ENCODE measurements at regions of chr19 and their contacts with region 1.

Region 1: DNA sequence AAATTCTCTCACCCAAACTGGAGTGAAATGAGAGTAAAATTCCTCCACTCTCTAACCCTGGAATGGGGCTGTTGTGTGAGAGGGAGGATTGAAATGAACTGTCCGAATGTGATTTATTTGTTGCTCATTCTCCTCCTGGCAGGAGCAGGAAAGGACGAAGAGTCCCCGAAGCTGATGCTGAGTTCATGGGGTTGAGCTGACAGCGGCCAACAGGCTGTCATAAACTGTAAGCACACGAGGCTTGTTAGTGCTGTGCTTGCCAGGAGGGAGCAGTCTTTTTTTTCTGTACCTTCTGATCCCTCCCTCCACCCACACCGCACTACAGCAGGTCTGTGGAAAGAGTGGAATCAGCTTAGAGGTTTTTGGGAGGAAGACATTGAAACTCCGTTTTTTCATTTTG is 33.1 kb upstream of the ZNF331 start:
- DNase-seq: no peak
- ATAC-seq: no peak
- H3K4me3 ChIP-seq: no peak overlapping the region
- H3K27ac ChIP-seq: no peak overlapping the region
- H3K4me1 ChIP-seq: no peaks in the 10 kb centered on the region
- H3K27me3 ChIP-seq: peaks cover 4 to 19% of the 10 kb centered on the region in 2 experiments; a peak in 3 of 5 replicates
- CTCF ChIP-seq: no peak
- EP300 ChIP-seq: no peak
- POLR2A ChIP-seq: no peak
- RAD21 ChIP-seq: no peak

Region 2: DNA sequence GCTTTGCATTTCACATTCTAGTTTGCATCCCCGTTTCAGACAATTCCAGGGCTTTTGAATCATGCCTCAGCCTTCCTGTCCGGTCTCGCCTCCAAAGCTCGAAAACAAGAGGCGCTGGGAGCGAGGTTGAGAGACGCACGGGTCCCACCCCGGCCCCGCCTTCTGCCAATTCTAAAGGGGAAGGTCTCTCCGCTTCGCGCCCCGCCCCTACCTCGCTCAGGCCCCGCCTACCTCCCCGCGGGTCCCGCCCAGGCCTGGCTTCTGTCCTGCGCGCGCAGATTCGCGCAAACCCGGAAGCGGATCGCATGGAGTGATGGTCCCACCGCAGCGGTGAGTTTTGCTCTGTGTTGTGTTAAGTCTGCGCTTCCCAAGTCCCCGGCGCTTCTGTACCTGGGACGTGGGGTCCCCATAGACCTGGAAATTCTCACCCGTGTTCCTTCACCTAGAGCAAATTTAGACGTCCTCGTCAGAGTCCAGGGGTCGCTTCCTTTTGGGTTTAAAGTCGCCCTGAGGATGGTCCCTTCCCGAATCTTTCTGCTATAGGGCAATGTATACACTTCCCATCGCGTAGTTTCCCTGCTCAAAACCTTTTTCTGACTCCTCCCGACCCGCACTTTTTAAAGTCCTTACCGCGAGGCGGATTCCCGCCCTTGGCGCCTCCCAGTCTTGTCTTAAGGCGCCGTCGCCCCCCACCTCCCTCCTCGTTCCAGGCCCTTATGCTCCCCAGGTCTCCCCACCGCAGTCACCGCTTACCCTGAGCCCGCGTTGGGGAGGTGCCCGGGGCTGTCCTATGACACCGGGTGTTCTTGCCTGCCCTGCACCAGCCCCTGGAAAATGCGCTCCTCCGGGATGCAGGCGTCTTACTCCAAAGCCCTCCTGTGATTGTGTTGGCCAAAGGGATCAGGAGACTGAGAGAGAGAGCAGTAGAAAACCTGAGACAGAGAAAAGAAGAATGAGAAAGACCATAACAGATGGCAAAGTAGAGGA is 171.1 kb before region 1 on chr19 and contains the start of gene ZNF845:
- CTCF ChIA-PET with region 1: no interaction called
- POLR2A ChIA-PET with region 1: no interaction called
- in situ Hi-C with region 1: no loop called
- intact Hi-C with region 1: no loop called
- DNase-seq: peak; percentile 86 to 93 (median 92)
- ATAC-seq: peak; percentile 100
- H3K4me3 ChIP-seq: peak within 1 kb of the TSS; percentile 97
- H3K27ac ChIP-seq: peak within 1 kb of the TSS; percentile 91
- H3K4me1 ChIP-seq: peaks cover 0 to 11% of the 10 kb centered on the region in 2 experiments; a peak in 2 of 5 replicates
- H3K27me3 ChIP-seq: no peaks in the 10 kb centered on the region
- CTCF ChIP-seq: no peak
- EP300 ChIP-seq: no peak
- POLR2A ChIP-seq: peak; percentile 87
- RAD21 ChIP-seq: no peak
- polyA plus RNA-seq, gene ZNF845: 1.9 to 3.9 TPM

Region 3: GRCh38 chr19:53424968-53425597 is 79.8 kb before region 1 on chr19:
- CTCF ChIA-PET with region 1: no interaction called
- POLR2A ChIA-PET with region 1: no interaction called
- in situ Hi-C with region 1: loop called (anchors 5 kb)
- intact Hi-C with region 1: no loop called
- DNase-seq: peak; percentile 67 to 79 (median 72)
- ATAC-seq: peak; percentile 99
- H3K4me3 ChIP-seq: no peak overlapping the region
- H3K27ac ChIP-seq: no peak overlapping the region
- H3K4me1 ChIP-seq: no peaks in the 10 kb centered on the region; a peak in 1 of 5 replicates
- H3K27me3 ChIP-seq: no peaks in the 10 kb centered on the region
- CTCF ChIP-seq: peak; percentile 88 to 92 (median 92)
- EP300 ChIP-seq: no peak
- POLR2A ChIP-seq: no peak
- RAD21 ChIP-seq: peak; percentile 46 to 78; a peak in 3 of 4 replicates

Region 4: DNA sequence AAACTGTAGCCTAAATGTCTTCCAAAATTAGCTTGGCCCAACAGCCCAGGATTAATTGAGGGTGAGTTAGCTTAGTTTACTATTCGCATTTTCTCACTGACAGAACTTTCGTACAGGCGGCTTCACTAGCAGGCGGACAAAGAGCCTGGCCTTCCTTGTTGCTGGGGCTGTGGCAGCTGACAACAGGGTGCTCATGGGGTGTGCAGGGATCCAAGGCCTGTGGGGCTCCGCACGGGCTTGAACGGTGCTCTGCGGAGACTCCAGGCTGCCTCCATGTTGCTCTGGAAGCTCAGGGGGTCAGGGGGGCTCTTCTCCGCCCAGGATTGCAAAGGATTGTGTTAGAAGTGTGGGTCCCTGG is 90.6 kb after region 1 on chr19:
- CTCF ChIA-PET with region 1: no interaction called
- POLR2A ChIA-PET with region 1: no interaction called
- in situ Hi-C with region 1: no loop called
- intact Hi-C with region 1: no loop called
- DNase-seq: no peak
- ATAC-seq: no peak
- H3K4me3 ChIP-seq: no peak overlapping the region
- H3K27ac ChIP-seq: no peak overlapping the region
- H3K4me1 ChIP-seq: no peaks in the 10 kb centered on the region
- H3K27me3 ChIP-seq: peaks cover 0 to 36% of the 10 kb centered on the region in 2 experiments; a peak in 4 of 5 replicates
- CTCF ChIP-seq: no peak
- EP300 ChIP-seq: no peak
- POLR2A ChIP-seq: no peak
- RAD21 ChIP-seq: no peak